Heart left ventricle (tissue), 16 donors: ENCODE measurements at regions of chr11 and their contacts with region 1.

Region 1: DNA sequence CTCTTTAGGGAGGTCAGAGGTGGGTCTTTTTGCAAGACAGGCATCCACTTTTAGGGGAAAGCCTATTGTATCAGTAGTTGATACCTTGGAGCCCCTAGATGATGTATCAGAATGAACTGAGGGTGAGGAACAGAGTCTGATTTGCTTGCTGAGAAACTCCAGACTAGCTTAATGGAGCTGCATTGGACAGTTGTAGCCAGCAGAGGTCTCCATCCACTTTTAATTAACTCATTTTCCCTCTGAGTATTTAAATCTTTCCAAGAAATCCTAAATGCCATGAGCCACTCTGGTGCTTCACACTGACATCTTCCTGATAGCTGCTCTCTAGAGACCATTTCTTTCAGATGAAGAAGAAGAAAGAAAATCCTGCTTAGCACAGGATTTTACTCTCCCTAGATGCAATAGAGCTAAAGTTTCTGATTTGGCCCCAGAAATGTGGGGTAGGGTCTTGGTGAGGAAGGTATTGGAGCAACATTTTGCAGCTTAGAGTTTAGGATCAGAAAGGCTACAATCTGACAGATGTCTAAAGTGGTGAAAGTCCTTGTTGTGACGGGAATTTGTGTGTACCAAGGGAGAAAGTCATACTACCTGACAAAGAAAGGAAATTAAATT is 38.0 kb downstream of the EXT2 start:
- DNase-seq: no peak
- ATAC-seq: peak in 3 of 4 donors; percentile 43 to 63 (median 47)
- H3K4me3 ChIP-seq: no peak overlapping the region
- H3K27ac ChIP-seq: no peak overlapping the region
- H3K4me1 ChIP-seq: peaks cover 0 to 8% (median 0%) of the 10 kb centered on the region in 12 donors
- H3K27me3 ChIP-seq: no peaks in the 10 kb centered on the region
- CTCF ChIP-seq: peak; percentile 47 to 76 (median 66)
- POLR2A ChIP-seq: no peak

Region 2: DNA sequence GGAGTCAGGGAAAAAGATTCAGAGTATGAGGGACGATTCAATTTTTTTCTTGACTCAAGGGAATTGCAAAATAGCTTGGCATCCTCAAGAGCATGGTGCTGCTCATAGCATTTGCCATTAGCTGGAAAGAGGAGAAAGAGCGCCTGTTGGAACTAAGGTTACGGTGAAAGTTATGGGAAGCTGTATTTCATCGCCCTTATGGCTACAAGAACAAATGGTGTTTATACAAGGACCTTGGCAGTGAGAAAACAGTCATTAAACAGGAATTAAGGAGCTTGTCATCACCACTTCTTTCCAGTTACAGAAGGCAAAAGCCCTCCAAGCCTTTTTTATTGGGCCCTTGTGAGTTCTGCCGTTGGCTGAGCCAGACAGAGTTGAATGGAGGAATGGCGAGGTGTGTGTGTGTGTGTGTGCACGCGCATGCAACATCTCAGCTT is 102.3 kb after region 1 on chr11:
- intact Hi-C with region 1: loop called in 1 of 10 experiments (anchors 10 kb)
- DNase-seq: no peak
- ATAC-seq: peak in 2 of 4 donors; percentile 42 to 45
- H3K4me3 ChIP-seq: no peak overlapping the region
- H3K27ac ChIP-seq: no peak overlapping the region
- H3K4me1 ChIP-seq: peaks cover 0 to 17% (median 5%) of the 10 kb centered on the region in 12 donors
- H3K27me3 ChIP-seq: no peaks in the 10 kb centered on the region
- CTCF ChIP-seq: no peak
- POLR2A ChIP-seq: no peak

Region 3: DNA sequence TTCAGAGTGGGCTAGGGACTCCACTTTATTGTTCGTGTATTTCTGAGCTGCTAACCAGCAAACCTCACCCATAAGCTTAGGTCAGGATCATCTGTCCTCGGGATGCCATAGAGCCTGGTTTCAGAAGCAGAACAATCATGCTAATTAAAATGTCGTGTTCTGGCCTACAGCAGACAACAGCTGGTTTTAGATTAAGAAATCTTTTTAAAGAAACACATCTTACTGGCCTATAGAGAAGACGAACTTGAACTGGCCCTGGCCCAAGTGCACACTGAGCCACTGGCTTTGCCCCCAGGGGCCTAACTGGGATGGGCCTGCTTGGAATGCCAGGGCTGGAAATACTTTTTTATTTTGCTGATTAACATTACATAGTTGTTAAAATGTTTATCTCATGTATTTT is 113.3 kb after region 1 on chr11:
- intact Hi-C with region 1: loop called in 2 of 10 experiments (anchors 5 to 10 kb)
- DNase-seq: peak in 2 of 5 donors; percentile 68 to 71
- ATAC-seq: peak in 2 of 4 donors; percentile 29 to 40
- H3K4me3 ChIP-seq: no peak overlapping the region
- H3K27ac ChIP-seq: peak overlapping the region in 2 of 12 donors; percentile 12 to 19
- H3K4me1 ChIP-seq: peaks cover 0 to 61% (median 35%) of the 10 kb centered on the region in 12 donors
- H3K27me3 ChIP-seq: no peaks in the 10 kb centered on the region
- CTCF ChIP-seq: no peak
- POLR2A ChIP-seq: no peak

Region 4: GRCh38 chr11:44256673-44257291 is 123.3 kb after region 1 on chr11:
- intact Hi-C with region 1: loop called in 1 of 10 experiments (anchors 10 kb)
- DNase-seq: peak in 2 of 5 donors; percentile 52 to 57
- ATAC-seq: peak in 2 of 4 donors; percentile 49 to 73
- H3K4me3 ChIP-seq: no peak overlapping the region
- H3K27ac ChIP-seq: no peak overlapping the region
- H3K4me1 ChIP-seq: peaks cover 0 to 7% (median 0%) of the 10 kb centered on the region in 12 donors
- H3K27me3 ChIP-seq: no peaks in the 10 kb centered on the region
- CTCF ChIP-seq: no peak
- POLR2A ChIP-seq: no peak

Region 5: GRCh38 chr11:44286268-44286880 is 152.9 kb after region 1 on chr11:
- intact Hi-C with region 1: loop called in 5 of 10 experiments (anchors 10 kb)
- DNase-seq: peak in 4 of 5 donors; percentile 51 to 66 (median 58)
- ATAC-seq: peak; percentile 37 to 80 (median 71)
- H3K4me3 ChIP-seq: no peak overlapping the region
- H3K27ac ChIP-seq: no peak overlapping the region
- H3K4me1 ChIP-seq: no peaks in the 10 kb centered on the region
- H3K27me3 ChIP-seq: no peaks in the 10 kb centered on the region
- CTCF ChIP-seq: peak; percentile 86 to 98 (median 95)
- POLR2A ChIP-seq: no peak

Region 6: GRCh38 chr11:44470854-44471253 is 337.4 kb after region 1 on chr11:
- intact Hi-C with region 1: loop called in 1 of 10 experiments (anchors 5 kb)
- DNase-seq: peak in 3 of 5 donors; percentile 18 to 54 (median 54)
- ATAC-seq: peak in 3 of 4 donors; percentile 63 to 81 (median 67)
- H3K4me3 ChIP-seq: no peak overlapping the region
- H3K27ac ChIP-seq: no peak overlapping the region
- H3K4me1 ChIP-seq: peaks cover 0 to 19% (median 5%) of the 10 kb centered on the region in 12 donors
- H3K27me3 ChIP-seq: no peaks in the 10 kb centered on the region
- CTCF ChIP-seq: no peak
- POLR2A ChIP-seq: no peak

Region 7: GRCh38 chr11:44538375-44539054 is 405.1 kb after region 1 on chr11:
- intact Hi-C with region 1: loop called in 9 of 10 experiments (anchors 2 to 5 kb)
- DNase-seq: peak; percentile 76 to 83 (median 80)
- ATAC-seq: peak; percentile 92 to 94 (median 92)
- H3K4me3 ChIP-seq: peak overlapping the region in 3 of 12 donors; percentile 5 to 26 (median 11)
- H3K27ac ChIP-seq: no peak overlapping the region
- H3K4me1 ChIP-seq: peaks cover 0 to 9% (median 0%) of the 10 kb centered on the region in 12 donors
- H3K27me3 ChIP-seq: no peaks in the 10 kb centered on the region
- CTCF ChIP-seq: peak; percentile 90 to 99 (median 96)
- POLR2A ChIP-seq: no peak